ENCODE measurements at regions of chr1 and their contacts with region 1.

Region 1: GRCh38 chr1:116232989-116233514 is 121.9 kb downstream of the MAB21L3 start:
- DNase-seq: peak; percentile 25
- H3K4me3 Mint-ChIP-seq: no peak overlapping the region
- H3K27ac Mint-ChIP-seq: no peak overlapping the region
- H3K4me1 Mint-ChIP-seq: peaks cover 17% of the 10 kb centered on the region
- H3K27me3 Mint-ChIP-seq: no peaks in the 10 kb centered on the region

Region 2: GRCh38 chr1:116360429-116361173 is 127.5 kb after region 1 on chr1:
- CTCF ChIA-PET with region 1: no interaction called
- intact Hi-C with region 1: loop called (anchors 5 kb)
- DNase-seq: no peak
- H3K4me3 Mint-ChIP-seq: no peak overlapping the region
- H3K27ac Mint-ChIP-seq: no peak overlapping the region
- H3K4me1 Mint-ChIP-seq: peaks cover 25% of the 10 kb centered on the region
- H3K27me3 Mint-ChIP-seq: no peaks in the 10 kb centered on the region